Posterior vena cava (tissue), 2 donors: ENCODE measurements at regions of chr6 and their contacts with region 1.

Region 1: GRCh38 chr6:106451439-106451838 is 90.9 kb downstream of the CRYBG1 start:
- DNase-seq: no peak

Region 2: GRCh38 chr6:104459543-104459942 is 1991.9 kb before region 1 on chr6:
- intact Hi-C with region 1: no loop called
- DNase-seq: no peak

Region 3: GRCh38 chr6:106608062-106608668 is 156.7 kb after region 1 on chr6:
- intact Hi-C with region 1: no loop called
- DNase-seq: no peak

Region 4: GRCh38 chr6:107361753-107362604 is 910.5 kb after region 1 on chr6:
- intact Hi-C with region 1: loop called in 1 of 2 experiments (anchors 10 kb)
- DNase-seq: no peak